ENCODE measurements at regions of chr3 and their contacts with region 1.

Region 1: DNA sequence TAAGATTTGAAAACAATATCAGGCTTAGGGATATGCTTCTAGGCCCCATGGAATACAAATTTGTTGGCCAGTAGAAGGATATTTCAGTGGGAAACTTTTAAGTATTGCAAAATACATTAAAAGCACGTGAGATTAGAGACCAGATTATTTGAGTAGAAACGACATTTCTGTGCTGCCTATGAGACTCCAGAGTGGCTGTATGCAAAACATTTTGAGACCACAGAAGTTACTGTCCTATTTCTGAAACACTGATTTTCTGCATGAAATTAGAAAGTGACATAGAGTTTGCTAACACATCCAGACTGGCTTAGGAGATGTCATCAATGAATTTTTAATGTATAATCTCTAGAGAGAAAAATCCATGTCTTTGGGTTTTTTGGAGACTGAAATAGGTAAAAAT is 99.8 kb downstream of the KCNH8 start:
- DNase-seq: no peak
- H3K4me3 ChIP-seq: no peak overlapping the region
- H3K27ac ChIP-seq: no peak overlapping the region
- H3K4me1 ChIP-seq: no peaks in the 10 kb centered on the region
- H3K27me3 ChIP-seq: no peaks in the 10 kb centered on the region
- CTCF ChIP-seq: no peak
- EP300 ChIP-seq: no peak
- POLR2A ChIP-seq: no peak

Region 2: DNA sequence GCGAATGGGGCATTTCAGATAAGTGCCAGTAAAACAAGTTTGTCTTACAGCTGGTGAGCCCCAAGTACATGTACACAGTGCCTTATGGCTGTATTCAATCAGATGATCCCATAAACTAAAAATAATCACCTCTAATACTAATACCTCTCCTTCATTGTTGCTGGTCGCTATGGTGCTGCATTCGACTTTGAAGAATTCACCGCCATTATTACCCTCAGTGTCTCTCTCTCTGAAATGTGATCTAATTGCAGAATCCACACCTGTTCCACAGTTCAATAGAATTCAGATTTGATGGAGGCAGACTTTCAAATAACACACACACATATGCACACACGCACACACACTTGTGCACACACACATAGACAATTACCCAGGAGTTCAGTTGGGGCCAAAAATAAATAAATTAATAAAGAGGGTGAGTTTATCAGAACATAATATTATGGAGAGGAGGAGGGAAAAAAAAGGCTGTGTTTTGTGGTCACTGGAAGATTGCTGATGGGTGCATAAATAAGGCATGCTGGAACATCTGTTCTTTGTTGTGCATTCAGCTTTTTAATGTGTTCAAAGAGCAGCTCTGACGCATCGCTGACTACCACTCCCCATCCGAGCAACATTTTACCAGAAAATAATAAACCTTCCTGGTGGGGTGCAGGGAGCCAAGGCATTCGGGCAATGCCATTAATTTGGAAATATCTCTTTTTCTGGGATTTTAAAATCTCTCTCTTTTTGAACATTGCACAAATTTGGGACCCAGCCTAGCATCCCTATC is 1058.7 kb before region 1 on chr3:
- in situ Hi-C with region 1: no loop called
- intact Hi-C with region 1: loop called (anchors 5 kb)
- DNase-seq: no peak
- H3K4me3 ChIP-seq: no peak overlapping the region
- H3K27ac ChIP-seq: no peak overlapping the region
- H3K4me1 ChIP-seq: no peaks in the 10 kb centered on the region
- H3K27me3 ChIP-seq: no peaks in the 10 kb centered on the region
- CTCF ChIP-seq: no peak
- EP300 ChIP-seq: no peak
- POLR2A ChIP-seq: no peak

Measured in transverse colon (tissue), 4 donors.